Ascending aorta (tissue), 2 donors: ENCODE measurements at regions of chr2 and their contacts with region 1.

Region 1: DNA sequence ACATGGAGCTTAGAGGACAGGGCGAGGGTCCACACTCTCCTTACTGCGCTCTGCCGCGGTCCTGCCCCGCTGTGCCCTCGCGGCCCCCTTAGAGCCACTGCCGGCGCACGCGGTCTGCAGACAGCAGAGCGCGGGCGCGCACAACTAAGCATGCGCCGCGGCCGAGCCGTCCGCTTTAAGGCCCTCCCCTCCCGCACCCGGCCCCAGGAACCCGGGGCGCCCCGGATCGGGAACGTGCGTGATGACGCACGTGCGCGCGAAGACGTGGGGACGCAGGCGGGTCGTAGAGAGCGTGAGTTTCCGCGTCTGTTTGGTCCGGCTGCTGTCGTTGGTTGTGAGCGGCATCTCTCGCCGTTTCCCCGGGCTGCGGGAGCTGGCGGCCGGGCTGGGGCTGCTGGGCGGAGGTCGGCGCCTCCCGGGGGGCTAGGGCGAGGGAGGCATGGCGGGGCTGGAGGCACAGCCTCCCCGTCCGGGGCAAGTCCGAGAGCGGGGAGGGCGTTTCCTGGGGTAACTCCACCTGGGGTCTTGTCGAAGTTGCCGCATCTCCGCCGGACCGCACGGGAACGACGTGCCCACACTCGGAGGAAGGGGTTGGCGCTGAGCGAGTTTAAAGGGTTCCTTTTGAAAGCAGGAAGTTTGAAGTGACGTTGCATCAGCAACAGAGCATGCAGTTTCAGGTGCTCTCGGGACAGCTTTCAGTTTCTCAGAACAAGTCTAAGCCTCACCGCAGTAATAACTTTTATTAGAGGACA is at the start of gene RHBDD1:
- DNase-seq: peak; percentile 72 to 96
- H3K4me3 ChIP-seq: peak within 1 kb of the TSS; percentile 89 to 96
- H3K27ac ChIP-seq: peak within 1 kb of the TSS; percentile 98 to 99
- H3K4me1 ChIP-seq: peaks cover 2 to 10% of the 10 kb centered on the region in 2 donors
- H3K27me3 ChIP-seq: no peaks in the 10 kb centered on the region
- CTCF ChIP-seq: peak in 2 of 3 experiments; percentile 1 to 4
- total RNA-seq, gene RHBDD1: 3.7 TPM

Region 2: GRCh38 chr2:226956659-226957058 is 120.7 kb after region 1 on chr2:
- intact Hi-C with region 1: no loop called
- DNase-seq: no peak
- H3K4me3 ChIP-seq: no peak overlapping the region
- H3K27ac ChIP-seq: no peak overlapping the region
- H3K4me1 ChIP-seq: peaks cover 5 to 11% of the 10 kb centered on the region in 2 donors
- H3K27me3 ChIP-seq: no peaks in the 10 kb centered on the region
- CTCF ChIP-seq: no peak

Region 3: GRCh38 chr2:226971084-226971483 is 135.1 kb after region 1 on chr2:
- intact Hi-C with region 1: loop called (anchors 5 kb)
- DNase-seq: no peak
- H3K4me3 ChIP-seq: peak overlapping the region in 1 of 2 donors; percentile 47
- H3K27ac ChIP-seq: peak overlapping the region; percentile 72 to 80
- H3K4me1 ChIP-seq: peaks cover 3 to 15% of the 10 kb centered on the region in 2 donors
- H3K27me3 ChIP-seq: no peaks in the 10 kb centered on the region
- CTCF ChIP-seq: no peak

Region 4: GRCh38 chr2:227789803-227790202 is 953.8 kb after region 1 on chr2:
- intact Hi-C with region 1: loop called (anchors 10 kb)
- DNase-seq: no peak
- H3K4me3 ChIP-seq: no peak overlapping the region
- H3K27ac ChIP-seq: no peak overlapping the region
- H3K4me1 ChIP-seq: no peaks in the 10 kb centered on the region
- H3K27me3 ChIP-seq: no peaks in the 10 kb centered on the region
- CTCF ChIP-seq: no peak